ENCODE measurements at regions of chr2 and their contacts with region 1.

Region 1: GRCh38 chr2:196291873-196292800 is 120.8 kb upstream of the STK17B start:
- DNase-seq: peak; percentile 99
- ATAC-seq: peak; percentile 66
- H3K4me3 ChIP-seq: peak overlapping the region; percentile 49
- H3K27ac ChIP-seq: peak overlapping the region; percentile 98
- H3K4me1 ChIP-seq: peaks cover 54% of the 10 kb centered on the region
- H3K27me3 ChIP-seq: no peaks in the 10 kb centered on the region
- CTCF ChIP-seq: no peak

Region 2: DNA sequence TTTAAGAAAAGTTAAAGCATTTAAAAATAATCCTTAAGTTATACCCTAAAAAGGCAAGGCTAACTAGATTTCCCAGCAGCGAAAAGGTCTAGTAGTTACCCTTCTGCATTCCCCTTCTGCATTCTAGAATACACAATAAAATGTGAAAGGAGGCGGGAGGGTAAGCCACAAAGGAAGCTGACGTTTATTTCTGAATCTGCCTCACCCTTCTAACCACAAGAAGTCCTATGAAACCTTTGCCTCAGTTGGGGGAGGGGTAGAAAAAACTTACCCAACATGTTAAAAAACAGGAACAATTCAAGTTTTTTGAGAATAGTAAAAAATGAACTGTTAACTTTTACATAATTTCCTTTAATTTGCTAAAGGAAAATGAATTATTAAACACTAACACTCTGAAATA is 132.0 kb before region 1 on chr2:
- CTCF ChIA-PET with region 1: no interaction called
- POLR2A ChIA-PET with region 1: no interaction called
- intact Hi-C with region 1: loop called (anchors 2 kb)
- DNase-seq: peak; percentile 95
- ATAC-seq: peak; percentile 98
- H3K4me3 ChIP-seq: peak overlapping the region; percentile 41
- H3K27ac ChIP-seq: peak overlapping the region; percentile 52
- H3K4me1 ChIP-seq: peaks cover 22% of the 10 kb centered on the region
- H3K27me3 ChIP-seq: no peaks in the 10 kb centered on the region
- CTCF ChIP-seq: no peak

Region 3: DNA sequence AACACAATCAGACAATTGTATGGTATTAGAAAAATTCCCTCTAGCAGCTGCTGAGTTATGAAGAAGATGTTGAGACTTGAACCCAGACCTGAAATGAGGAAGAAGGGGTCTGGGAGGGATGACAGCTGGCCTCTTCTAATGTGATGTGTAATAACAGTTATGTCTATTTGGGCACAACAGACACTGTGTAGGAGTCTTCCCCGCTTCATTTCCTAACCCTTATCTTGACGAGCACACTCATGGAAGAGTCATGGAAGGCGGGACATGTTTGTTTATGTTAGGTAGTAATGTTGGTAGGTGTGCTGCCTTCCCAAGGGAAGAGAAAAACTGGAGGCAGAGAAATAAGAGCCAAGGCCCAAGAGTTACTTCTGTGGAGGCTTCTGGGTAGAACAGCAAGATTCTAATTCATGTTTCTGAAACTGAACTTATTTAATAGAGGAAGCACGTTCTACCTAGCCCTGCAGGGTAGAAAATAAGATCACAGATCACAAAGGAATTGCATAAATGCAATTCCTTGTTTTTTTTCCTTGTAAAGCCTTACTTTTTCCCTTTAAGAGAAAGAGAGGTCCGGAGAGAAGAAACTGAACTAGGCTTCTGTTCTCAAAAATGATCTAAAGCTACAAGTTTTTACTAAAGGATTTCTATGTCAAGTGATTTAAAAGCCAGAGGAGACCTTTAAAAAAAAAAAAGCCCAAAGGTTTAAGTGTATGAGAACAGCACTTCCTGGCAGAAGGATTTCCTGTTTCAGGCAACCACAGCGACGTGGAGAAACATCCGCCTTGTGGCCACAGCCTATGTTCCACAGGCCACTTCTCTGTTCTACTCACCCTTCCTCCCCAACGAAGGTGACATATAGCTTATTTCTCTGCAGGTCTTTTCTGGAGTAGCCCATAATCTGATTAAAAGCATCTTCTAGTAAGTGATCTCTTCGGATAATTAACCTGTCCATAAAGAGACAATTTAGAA is 52.2 kb before region 1 on chr2:
- CTCF ChIA-PET with region 1: no interaction called
- POLR2A ChIA-PET with region 1: interaction called, 5 read pairs
- intact Hi-C with region 1: loop called (anchors 1 kb)
- DNase-seq: peak; percentile 97
- ATAC-seq: peak; percentile 97
- H3K4me3 ChIP-seq: peak overlapping the region; percentile 25; the same call in 1 of the 2 replicates
- H3K27ac ChIP-seq: peak overlapping the region; percentile 94
- H3K4me1 ChIP-seq: peaks cover 25% of the 10 kb centered on the region
- H3K27me3 ChIP-seq: no peaks in the 10 kb centered on the region
- CTCF ChIP-seq: 0 out of 2 replicates have a peak, but pooled peaks have one; percentile 33

Region 4: GRCh38 chr2:196314780-196315179 is 22.6 kb after region 1 on chr2:
- CTCF ChIA-PET with region 1: no interaction called
- POLR2A ChIA-PET with region 1: no interaction called
- intact Hi-C with region 1: loop called (anchors 1 kb)
- DNase-seq: peak; percentile 70
- ATAC-seq: peak; percentile 69
- H3K4me3 ChIP-seq: no peak overlapping the region
- H3K27ac ChIP-seq: peak overlapping the region; percentile 90
- H3K4me1 ChIP-seq: peaks cover 29% of the 10 kb centered on the region
- H3K27me3 ChIP-seq: no peaks in the 10 kb centered on the region
- CTCF ChIP-seq: peak; percentile 27; the same call in 1 of the 2 replicates

Region 5: DNA sequence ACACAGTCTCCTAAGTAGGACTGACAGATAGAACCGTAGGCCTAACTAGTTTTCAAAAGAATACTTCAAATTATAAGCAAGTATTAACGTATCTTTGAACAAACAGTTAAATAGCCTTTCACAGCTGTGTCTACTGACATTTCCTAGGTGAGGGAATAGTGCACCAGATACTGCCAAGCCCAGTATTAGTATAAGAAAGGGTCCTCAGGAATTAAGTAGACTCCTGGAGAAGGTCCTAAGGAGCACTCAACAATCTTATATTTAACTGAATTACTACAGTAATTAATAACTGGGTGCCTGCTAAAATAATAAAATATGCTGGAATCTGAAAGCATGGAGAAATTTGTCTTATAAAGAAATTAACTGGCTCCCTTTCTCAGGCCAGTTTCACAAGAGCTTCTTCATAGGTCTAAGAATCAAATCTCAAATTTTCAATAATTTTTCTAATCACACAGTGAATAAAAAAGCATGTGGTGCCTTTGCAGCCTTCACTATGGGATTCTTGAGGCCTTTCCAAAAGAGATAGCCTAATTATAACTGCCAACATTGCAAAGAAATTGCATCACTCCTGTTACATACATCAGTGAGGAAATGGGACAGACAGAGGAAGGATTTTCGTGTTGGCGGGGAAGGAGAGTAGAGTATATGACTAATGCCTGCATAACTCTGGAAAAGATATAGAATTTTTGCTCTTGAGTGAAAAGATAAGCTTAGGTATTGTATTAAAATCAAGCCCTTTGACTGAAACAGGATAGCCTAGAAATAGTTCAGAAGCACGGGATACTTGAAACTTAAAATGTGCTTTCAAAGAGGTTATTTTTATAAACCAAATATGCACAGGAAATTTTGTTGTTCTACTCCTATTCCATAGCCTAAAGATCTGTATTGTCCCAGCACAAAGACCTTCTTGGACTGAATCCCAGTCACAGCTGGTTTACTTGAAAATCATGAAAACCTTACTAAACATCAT is 107.9 kb after region 1 on chr2:
- CTCF ChIA-PET with region 1: no interaction called
- POLR2A ChIA-PET with region 1: no interaction called
- intact Hi-C with region 1: loop called (anchors 5 kb)
- DNase-seq: peak; percentile 79
- ATAC-seq: peak; percentile 71
- H3K4me3 ChIP-seq: no peak overlapping the region
- H3K27ac ChIP-seq: no peak overlapping the region
- H3K4me1 ChIP-seq: peaks cover 29% of the 10 kb centered on the region
- H3K27me3 ChIP-seq: no peaks in the 10 kb centered on the region
- CTCF ChIP-seq: no peak

Measured in PC-3 (cell line).